Left cardiac atrium (tissue), 4 donors: ENCODE measurements at regions of chrX and their contacts with region 1.

Region 1: DNA sequence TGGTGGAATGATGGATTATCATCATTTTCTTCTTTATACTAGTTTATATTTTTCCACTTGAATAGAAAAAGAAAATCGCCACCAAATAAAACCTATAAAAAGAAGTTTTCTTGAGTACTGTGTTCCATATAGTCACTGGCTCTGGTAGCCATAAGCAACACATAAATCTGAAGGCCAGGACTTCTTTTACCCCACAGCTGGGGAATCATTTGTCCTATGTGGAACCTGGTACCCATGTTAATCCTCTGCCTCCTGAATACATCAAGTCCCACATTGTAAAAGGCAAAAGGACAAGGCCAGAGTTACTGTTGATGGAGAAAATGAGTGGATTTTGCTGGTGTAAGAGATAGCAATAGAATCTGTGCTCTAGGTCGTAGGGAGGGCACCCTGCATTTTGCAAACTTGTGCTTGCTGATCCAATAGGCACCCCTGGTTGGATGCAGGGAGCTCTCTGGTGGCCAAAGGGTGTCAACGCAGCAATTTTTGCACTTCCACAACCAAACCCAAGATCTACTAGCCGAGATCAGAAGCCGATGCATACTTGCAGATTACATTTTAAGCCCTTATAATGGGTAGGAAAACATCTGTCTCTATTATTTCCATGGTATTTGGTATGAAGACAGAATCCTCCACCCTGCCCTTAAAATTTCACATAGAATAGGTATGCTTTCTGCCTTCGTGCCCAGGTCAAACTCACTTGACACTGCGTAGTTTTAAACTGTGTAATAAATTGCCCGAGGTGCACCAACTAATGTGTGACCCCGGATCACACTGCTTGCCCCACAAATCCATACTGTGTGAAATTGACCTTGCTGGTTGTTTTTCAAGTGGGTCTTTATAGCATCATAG is 146.2 kb upstream of the SCML1 start:
- DNase-seq: peak; percentile 44
- ATAC-seq: peak; percentile 86 to 92

Region 2: DNA sequence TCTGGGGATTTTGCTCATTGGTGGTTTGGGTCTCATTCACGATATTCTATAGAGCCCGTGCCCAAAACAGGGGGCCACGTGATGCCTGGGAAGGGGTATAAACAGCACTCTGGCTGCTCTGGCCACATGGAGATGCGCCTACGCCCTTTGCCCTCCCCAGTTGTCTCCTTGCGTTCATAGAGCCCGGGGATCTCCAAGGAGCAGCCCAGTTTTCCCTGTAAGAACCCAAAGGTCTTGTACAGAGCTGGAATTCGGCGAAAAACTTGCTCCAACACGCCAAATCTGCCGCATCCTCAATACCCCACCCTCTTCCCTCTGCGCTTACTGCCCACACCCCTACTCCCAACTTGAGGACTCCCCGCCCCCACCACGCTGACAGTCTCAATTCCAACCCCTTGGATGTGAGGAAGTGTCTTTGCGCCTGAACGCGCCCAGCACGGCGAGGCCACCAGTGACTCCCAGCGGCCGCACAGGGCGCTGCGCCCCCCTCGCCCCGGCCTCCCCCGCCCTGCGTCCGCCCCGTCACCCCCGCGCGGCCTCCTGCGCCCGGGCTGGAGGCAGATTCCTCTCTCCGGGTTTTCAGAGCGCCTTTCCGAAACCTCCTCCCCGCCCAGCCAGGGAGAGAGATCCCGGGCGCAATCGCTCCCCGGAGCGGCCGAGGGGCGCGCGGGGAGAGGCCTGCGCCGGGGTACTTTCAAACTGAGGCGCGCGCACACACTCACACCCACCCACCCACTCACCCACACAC is 216.3 kb before region 1 on chrX and contains the start of gene NHS:
- intact Hi-C with region 1: loop called in 1 of 2 experiments (anchors 10 kb)
- DNase-seq: peak; percentile 74
- ATAC-seq: peak; percentile 80 to 92
- total RNA-seq, gene NHS: 2.0 TPM

Region 3: DNA sequence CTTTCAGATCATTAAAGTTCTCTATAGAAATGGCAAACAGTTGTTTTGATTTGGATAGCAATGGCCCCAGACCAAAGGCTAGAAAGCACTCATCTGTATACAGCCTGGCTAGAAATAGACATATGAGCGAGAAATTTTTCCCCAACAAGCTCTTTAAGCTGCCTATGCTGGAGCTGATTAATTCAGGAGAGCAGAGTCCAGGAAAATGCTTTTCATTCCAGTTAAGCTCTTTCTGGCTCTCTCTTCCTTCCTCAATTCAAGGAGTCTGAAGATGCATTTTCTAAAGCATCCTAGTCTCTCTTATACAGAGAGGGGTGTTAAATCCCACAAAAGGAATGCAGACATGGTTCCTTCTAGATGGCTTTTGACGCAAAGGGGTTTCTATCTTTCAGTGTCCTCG is 411.7 kb after region 1 on chrX:
- intact Hi-C with region 1: no loop called
- DNase-seq: no peak
- ATAC-seq: no peak